GM12878 (cell line): ENCODE measurements at regions of chr2 and their contacts with region 1.

Region 1: GRCh38 chr2:179020156-179020750 is 29.7 kb downstream of the CCDC141 start:
- DNase-seq: no peak
- ATAC-seq: peak; percentile 73
- H3K4me3 ChIP-seq: no peak overlapping the region
- H3K27ac ChIP-seq: peak overlapping the region; percentile 71; the same call in 1 of the 2 replicates
- H3K4me1 ChIP-seq: peaks cover 34% of the 10 kb centered on the region
- H3K27me3 ChIP-seq: no peaks in the 10 kb centered on the region
- CTCF ChIP-seq: peak; percentile 68 to 73 (median 69)
- EP300 ChIP-seq: no peak
- POLR2A ChIP-seq: no peak
- RAD21 ChIP-seq: peak; percentile 89

Region 2: GRCh38 chr2:178700922-178701342 is 319.3 kb before region 1 on chr2:
- CTCF ChIA-PET with region 1: interaction called, 15 read pairs
- POLR2A ChIA-PET with region 1: no interaction called
- RAD21 ChIA-PET with region 1: no interaction called
- SMC1A ChIA-PET with region 1: no interaction called
- in situ Hi-C with region 1: no loop called
- intact Hi-C with region 1: no loop called
- DNase-seq: no peak
- ATAC-seq: peak; percentile 55
- H3K4me3 ChIP-seq: no peak overlapping the region
- H3K27ac ChIP-seq: no peak overlapping the region
- H3K4me1 ChIP-seq: no peaks in the 10 kb centered on the region
- H3K27me3 ChIP-seq: no peaks in the 10 kb centered on the region
- CTCF ChIP-seq: peak; percentile 69 to 94 (median 87)
- EP300 ChIP-seq: no peak
- POLR2A ChIP-seq: no peak
- RAD21 ChIP-seq: peak; percentile 42; the same call in 1 of the 2 replicates

Region 3: DNA sequence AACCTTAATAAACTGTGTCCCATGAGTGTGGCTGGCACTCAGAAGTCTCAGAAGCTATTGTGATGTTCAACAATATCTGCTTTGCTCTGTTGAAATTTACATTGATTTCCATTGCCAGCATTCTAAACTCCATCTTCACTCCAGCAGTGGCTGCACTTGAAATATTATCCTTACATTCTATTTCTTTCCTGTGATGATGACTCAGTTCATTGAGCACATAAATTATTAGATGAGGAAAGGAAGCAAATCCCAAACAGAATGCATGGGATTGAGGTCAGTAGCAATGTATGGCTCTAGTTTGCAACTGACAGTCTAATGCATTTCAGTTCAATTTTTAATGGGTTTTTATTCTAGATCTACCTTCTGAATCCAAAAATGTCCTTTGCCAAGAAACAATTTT is 120.6 kb before region 1 on chr2:
- CTCF ChIA-PET with region 1: interaction called, 56 read pairs
- POLR2A ChIA-PET with region 1: no interaction called
- RAD21 ChIA-PET with region 1: interaction called, 15 read pairs
- SMC1A ChIA-PET with region 1: interaction called, 56 read pairs
- in situ Hi-C with region 1: no loop called
- intact Hi-C with region 1: no loop called
- DNase-seq: no peak
- ATAC-seq: no peak
- H3K4me3 ChIP-seq: no peak overlapping the region
- H3K27ac ChIP-seq: no peak overlapping the region
- H3K4me1 ChIP-seq: no peaks in the 10 kb centered on the region
- H3K27me3 ChIP-seq: no peaks in the 10 kb centered on the region
- CTCF ChIP-seq: no peak
- EP300 ChIP-seq: no peak
- POLR2A ChIP-seq: no peak
- RAD21 ChIP-seq: no peak

Region 4: DNA sequence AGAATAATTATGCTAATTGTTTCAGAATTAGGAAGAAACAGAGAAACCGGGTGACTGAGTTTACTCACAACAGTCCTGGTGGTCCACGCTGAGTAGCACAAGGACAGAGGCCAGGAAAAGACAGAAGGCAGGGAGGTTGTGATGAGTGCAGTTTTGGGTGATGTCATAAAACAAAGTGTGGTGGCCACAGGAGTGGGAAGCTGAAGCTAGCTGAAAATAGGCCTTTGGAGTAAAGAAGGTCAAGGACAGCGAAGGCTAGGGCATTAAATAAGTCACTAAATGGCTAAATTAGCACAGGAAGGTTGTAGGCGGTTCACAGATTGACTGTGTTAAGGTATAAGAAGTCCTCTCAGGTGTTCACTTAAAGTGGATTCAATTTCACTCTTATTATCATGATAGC is 92.2 kb before region 1 on chr2:
- CTCF ChIA-PET with region 1: interaction called, 33 read pairs
- POLR2A ChIA-PET with region 1: interaction called, 7 read pairs
- RAD21 ChIA-PET with region 1: interaction called, 22 read pairs
- SMC1A ChIA-PET with region 1: interaction called, 65 read pairs
- in situ Hi-C with region 1: no loop called
- intact Hi-C with region 1: no loop called
- DNase-seq: peak; percentile 24
- ATAC-seq: peak; percentile 85
- H3K4me3 ChIP-seq: 0 out of 2 replicates have a peak overlapping the region, but pooled peaks have one; percentile 64
- H3K27ac ChIP-seq: no peak overlapping the region; the same call in 1 of the 2 replicates
- H3K4me1 ChIP-seq: peaks cover 14% of the 10 kb centered on the region
- H3K27me3 ChIP-seq: no peaks in the 10 kb centered on the region
- CTCF ChIP-seq: no peak
- EP300 ChIP-seq: no peak
- POLR2A ChIP-seq: no peak
- RAD21 ChIP-seq: no peak

Region 5: DNA sequence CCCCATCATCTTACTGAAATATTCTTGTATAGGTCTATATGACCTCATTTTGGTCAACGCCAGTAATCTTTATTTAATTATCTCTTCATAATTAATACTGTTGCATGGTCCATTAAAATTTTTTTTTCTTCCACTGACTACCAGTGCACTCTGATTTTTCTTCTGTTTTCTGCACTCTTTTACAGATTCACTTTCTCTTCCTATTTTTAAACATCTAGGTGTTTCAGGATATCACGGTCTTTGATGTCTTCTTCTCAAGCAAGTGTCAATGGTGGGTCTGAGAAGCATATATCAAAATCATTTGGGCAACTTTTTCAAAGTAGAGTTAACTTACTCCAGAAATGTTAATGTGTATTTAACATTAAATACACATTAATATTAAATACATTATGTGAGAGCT is 21.7 kb before region 1 on chr2:
- CTCF ChIA-PET with region 1: interaction called, 9 read pairs
- POLR2A ChIA-PET with region 1: no interaction called
- RAD21 ChIA-PET with region 1: interaction called, 10 read pairs
- SMC1A ChIA-PET with region 1: interaction called, 34 read pairs
- in situ Hi-C with region 1: no loop called
- intact Hi-C with region 1: no loop called
- DNase-seq: no peak
- ATAC-seq: no peak
- H3K4me3 ChIP-seq: no peak overlapping the region
- H3K27ac ChIP-seq: no peak overlapping the region
- H3K4me1 ChIP-seq: peaks cover 9% of the 10 kb centered on the region
- H3K27me3 ChIP-seq: no peaks in the 10 kb centered on the region
- CTCF ChIP-seq: no peak
- EP300 ChIP-seq: no peak
- POLR2A ChIP-seq: no peak
- RAD21 ChIP-seq: no peak

Region 6: DNA sequence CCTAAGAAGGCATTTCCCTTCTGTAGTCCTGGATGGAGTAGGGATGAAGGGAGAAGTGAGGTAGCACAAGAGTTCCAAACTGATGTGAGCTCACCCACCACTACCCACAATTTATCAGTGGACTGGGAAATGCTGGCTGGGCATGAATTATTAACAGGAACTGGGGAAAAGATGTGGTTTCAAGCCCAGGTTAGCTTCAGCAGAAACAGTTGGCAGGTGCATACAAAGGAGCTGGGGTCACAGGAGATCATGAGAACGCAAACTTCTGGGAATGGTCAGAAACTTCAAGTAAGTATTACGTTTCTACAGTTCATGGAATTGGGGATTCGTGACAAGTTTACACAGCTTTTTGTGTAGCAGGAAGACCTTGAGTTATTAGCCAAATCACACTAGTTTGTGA is 24.2 kb after region 1 on chr2:
- CTCF ChIA-PET with region 1: interaction called, 41 read pairs
- POLR2A ChIA-PET with region 1: interaction called, 44 read pairs
- RAD21 ChIA-PET with region 1: interaction called, 51 read pairs
- SMC1A ChIA-PET with region 1: interaction called, 89 read pairs
- in situ Hi-C with region 1: no loop called
- intact Hi-C with region 1: loop called (anchors 1 kb)
- DNase-seq: no peak
- ATAC-seq: peak; percentile 8
- H3K4me3 ChIP-seq: peak overlapping the region; percentile 25; the same call in 1 of the 2 replicates
- H3K27ac ChIP-seq: 0 out of 2 replicates have a peak overlapping the region, but pooled peaks have one; percentile 31
- H3K4me1 ChIP-seq: peaks cover 29% of the 10 kb centered on the region
- H3K27me3 ChIP-seq: no peaks in the 10 kb centered on the region
- CTCF ChIP-seq: no peak
- EP300 ChIP-seq: no peak
- POLR2A ChIP-seq: no peak
- RAD21 ChIP-seq: no peak

Region 7: GRCh38 chr2:179096090-179096489 is 75.8 kb after region 1 on chr2:
- CTCF ChIA-PET with region 1: interaction called, 41 read pairs
- POLR2A ChIA-PET with region 1: interaction called, 5 read pairs
- RAD21 ChIA-PET with region 1: interaction called, 24 read pairs
- SMC1A ChIA-PET with region 1: interaction called, 39 read pairs
- in situ Hi-C with region 1: no loop called
- intact Hi-C with region 1: loop called (anchors 5 kb)
- DNase-seq: peak; percentile 40
- ATAC-seq: peak; percentile 93
- H3K4me3 ChIP-seq: no peak overlapping the region
- H3K27ac ChIP-seq: 0 out of 2 replicates have a peak overlapping the region, but pooled peaks have one; percentile 23
- H3K4me1 ChIP-seq: peaks cover 19% of the 10 kb centered on the region
- H3K27me3 ChIP-seq: no peaks in the 10 kb centered on the region
- CTCF ChIP-seq: no peak
- EP300 ChIP-seq: peak; percentile 48 to 50; a peak in 2 of 4 replicates
- POLR2A ChIP-seq: no peak
- RAD21 ChIP-seq: no peak